ENCODE measurements at regions of chr19 and their contacts with region 1.

Region 1: DNA sequence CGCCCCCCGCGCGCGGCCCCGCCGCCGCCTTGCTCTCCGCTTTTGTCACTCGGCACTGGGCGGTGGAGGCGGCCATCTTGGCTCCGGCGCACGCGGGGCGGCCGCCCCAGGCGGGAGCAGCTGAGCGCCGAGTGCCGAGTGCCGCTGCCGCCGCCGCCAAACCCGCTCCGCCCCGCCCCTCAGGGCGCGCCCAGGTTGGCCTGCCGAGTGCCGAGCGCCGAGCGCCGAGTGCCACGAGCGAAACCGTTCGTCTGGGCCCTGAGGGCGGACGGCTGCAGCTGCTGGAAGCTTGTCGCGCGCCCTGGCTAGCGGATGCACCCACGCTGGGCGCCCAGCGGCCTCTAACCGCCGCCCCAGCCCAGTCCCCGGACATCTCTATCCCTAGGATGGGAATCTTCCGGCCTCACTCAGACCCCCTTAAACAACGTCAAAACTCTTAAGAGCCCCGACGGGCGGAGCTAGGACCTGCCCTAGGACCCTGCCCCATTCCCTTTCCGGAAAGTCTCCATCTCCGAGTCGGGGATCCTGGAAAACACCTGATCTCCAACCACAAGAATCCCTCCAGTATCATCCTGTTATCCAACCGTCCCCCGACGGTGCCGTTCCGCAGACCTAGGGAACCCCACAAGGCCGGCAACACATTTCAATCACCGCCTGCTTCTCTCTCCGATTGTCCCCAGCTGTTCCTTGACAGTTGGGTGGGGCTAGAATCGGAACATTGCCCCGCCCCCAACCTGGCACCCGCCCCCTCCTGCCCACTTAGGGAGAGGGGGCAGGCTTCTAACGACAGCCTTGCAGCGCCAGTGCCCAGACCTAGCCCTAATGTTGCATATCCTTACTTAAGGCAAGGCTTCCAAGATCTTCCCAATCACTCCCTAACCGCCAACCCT is 14.1 kb upstream of the AKAP8L start:
- DNase-seq: peak; percentile 93
- H3K4me3 Mint-ChIP-seq: peak overlapping the region; percentile 95
- H3K27ac Mint-ChIP-seq: peak overlapping the region; percentile 90
- H3K4me1 Mint-ChIP-seq: peaks cover 29% of the 10 kb centered on the region
- H3K27me3 Mint-ChIP-seq: no peaks in the 10 kb centered on the region

Region 2: GRCh38 chr19:14672188-14672872 is 760.5 kb before region 1 on chr19:
- CTCF ChIA-PET with region 1: interaction called, 10 read pairs
- intact Hi-C with region 1: no loop called
- DNase-seq: no peak
- H3K4me3 Mint-ChIP-seq: no peak overlapping the region
- H3K27ac Mint-ChIP-seq: no peak overlapping the region
- H3K4me1 Mint-ChIP-seq: peaks cover 2% of the 10 kb centered on the region
- H3K27me3 Mint-ChIP-seq: peaks cover 33% of the 10 kb centered on the region

Region 3: DNA sequence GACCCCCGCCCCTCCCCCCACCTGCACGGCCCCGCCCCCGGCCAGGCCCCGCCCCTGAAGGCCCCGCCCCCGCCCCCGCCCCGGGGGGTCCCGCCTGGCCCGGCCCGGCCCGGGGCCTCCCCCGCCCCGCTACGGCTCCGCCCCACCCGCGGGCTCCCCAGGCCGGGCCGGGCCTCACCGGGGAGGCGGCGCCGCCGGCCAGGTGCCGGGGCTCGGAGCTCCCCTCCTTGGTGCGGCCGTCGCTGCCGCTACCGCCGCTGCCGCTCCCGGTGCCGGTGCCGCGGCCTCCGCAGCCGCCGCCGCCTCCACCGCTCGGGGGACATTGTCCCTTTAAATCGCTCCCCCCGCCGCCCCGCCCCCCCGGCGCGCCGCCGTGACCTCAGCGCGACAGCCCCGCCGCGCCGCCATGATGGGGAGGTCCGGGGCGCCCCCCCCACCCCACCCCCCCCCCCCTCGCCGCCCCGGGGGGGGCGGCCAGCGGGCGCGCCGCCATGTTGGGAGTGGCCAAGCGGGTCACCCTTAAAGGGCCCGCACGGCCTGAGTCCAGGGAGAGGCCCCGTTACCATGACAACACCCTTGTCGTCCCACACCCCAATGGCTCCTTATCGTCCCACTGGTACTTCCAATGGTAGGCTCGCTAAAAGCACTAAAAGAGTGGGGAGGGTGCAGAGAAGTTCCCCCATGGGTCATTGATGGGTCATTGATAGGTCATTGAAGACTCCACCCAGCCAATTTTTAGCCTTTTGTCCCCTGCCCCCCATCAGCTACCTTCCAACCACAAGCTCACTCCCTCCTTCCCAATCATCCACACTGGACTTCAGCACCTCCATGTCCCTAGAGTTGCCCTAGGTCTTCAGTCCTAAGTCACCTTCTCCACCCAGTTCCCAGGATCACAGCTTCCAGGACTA is 17.0 kb after region 1 on chr19 and contains the start of gene WIZ:
- CTCF ChIA-PET with region 1: no interaction called
- intact Hi-C with region 1: loop called (anchors 1 kb)
- DNase-seq: peak; percentile 80
- H3K4me3 Mint-ChIP-seq: peak within 1 kb of the TSS; percentile 75
- H3K27ac Mint-ChIP-seq: peak within 1 kb of the TSS; percentile 74
- H3K4me1 Mint-ChIP-seq: peaks cover 15% of the 10 kb centered on the region
- H3K27me3 Mint-ChIP-seq: no peaks in the 10 kb centered on the region
- total RNA-seq, gene WIZ: 16.5 to 16.7 TPM